ENCODE measurements at regions of chr3 and their contacts with region 1.

Region 1: DNA sequence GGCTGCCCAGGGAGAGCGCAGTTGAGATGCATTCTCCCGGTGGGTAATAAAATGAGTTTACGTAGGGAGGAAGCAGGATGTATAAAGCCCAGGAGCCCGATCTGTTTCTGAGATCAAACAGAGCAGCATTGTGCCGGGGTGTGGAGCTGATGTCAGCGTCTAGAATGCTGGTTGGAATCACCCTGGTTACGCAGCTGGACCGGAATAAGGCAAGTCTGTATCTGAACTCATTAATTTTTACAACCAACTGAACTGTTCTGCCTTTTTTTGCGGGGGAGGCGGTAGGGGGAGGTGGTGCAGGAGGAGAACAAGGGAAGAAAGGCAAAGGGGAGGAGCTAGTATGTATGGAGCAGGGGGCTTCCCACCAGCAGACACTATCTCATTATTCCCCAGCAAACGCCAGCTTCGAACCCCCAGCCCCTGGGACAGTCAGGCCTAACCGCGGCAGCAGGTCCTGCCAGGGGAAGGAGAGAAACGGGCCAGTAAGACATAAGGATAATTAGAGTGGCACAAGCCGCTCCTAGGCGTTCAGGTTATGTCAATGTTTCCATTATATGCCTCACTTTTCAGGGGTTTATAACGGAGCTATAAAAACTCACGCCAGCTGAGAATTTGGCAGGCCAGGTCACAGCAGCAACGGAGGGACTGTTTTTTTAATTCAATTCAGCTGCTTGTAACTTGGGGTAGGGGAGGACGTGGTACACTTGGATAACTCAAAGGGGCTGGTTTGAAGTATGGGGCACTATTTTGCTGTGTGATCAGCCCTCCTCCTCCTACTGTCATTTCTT is 175.3 kb upstream of the HES1 start:
- DNase-seq: no peak
- H3K4me3 Mint-ChIP-seq: no peak overlapping the region
- H3K27ac Mint-ChIP-seq: no peak overlapping the region
- H3K4me1 Mint-ChIP-seq: peaks cover 24% of the 10 kb centered on the region
- H3K27me3 Mint-ChIP-seq: peaks cover 58% of the 10 kb centered on the region

Region 2: GRCh38 chr3:193872265-193872753 is 88.4 kb before region 1 on chr3:
- intact Hi-C with region 1: loop called (anchors 10 kb)
- DNase-seq: no peak
- H3K4me3 Mint-ChIP-seq: no peak overlapping the region
- H3K27ac Mint-ChIP-seq: no peak overlapping the region
- H3K4me1 Mint-ChIP-seq: peaks cover 13% of the 10 kb centered on the region
- H3K27me3 Mint-ChIP-seq: peaks cover 50% of the 10 kb centered on the region

Region 3: GRCh38 chr3:193910886-193911738 is 49.6 kb before region 1 on chr3:
- intact Hi-C with region 1: no loop called
- DNase-seq: no peak
- H3K4me3 Mint-ChIP-seq: no peak overlapping the region
- H3K27ac Mint-ChIP-seq: no peak overlapping the region
- H3K4me1 Mint-ChIP-seq: peaks cover 20% of the 10 kb centered on the region
- H3K27me3 Mint-ChIP-seq: peaks cover 2% of the 10 kb centered on the region

Region 4: DNA sequence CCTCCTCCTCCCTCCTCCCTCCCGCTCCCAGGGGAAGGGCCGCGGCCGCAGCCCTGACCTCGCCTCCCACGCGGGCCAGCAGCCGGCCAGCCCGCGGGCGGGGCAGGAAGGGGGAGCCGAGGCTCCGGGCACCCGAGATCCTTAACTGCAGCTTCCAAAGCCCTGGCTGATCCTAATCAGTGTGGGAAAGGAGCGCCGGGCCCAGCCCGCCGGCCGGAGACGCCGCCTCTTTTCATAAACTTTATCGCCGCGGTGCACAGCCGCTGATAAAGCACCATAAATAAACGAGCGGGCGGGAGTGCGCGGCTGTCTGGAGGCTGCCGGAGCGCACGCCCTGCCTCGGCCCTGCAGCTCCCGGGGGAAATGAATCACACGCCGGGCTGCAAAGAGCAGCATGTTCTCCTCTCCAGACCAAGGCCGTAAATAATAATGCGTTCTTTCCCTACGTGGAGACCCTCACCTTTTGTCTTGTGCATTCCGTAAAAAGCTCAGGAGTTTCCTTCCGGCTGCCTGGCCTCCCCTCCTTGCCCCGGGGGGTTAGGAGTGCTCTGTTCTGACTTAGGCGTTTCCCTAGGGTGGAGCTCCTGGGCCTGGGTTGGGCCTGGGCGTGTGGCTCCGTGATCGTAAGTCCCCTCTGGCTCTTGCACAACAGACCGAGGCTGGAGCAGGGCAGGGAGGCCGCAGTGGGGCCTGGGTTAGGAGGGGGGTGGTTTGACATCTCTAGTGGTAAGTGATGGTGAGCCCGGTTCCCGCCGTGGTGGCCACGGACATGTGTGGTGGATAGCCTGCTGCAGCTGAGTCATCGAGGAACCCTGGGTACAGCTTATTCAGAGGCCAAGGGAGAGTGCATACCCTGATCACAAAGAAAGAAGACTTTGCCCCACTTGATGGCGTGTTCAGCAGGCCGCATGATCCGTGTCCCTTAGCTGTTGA is 42.7 kb after region 1 on chr3:
- intact Hi-C with region 1: loop called (anchors 5 kb)
- DNase-seq: no peak
- H3K4me3 Mint-ChIP-seq: no peak overlapping the region
- H3K27ac Mint-ChIP-seq: no peak overlapping the region
- H3K4me1 Mint-ChIP-seq: peaks cover 6% of the 10 kb centered on the region
- H3K27me3 Mint-ChIP-seq: peaks cover 64% of the 10 kb centered on the region

Region 5: GRCh38 chr3:194141415-194142155 is 180.9 kb after region 1 on chr3:
- intact Hi-C with region 1: no loop called
- DNase-seq: peak; percentile 52
- H3K4me3 Mint-ChIP-seq: peak overlapping the region; percentile 63
- H3K27ac Mint-ChIP-seq: peak overlapping the region; percentile 62
- H3K4me1 Mint-ChIP-seq: peaks cover 28% of the 10 kb centered on the region
- H3K27me3 Mint-ChIP-seq: peaks cover 64% of the 10 kb centered on the region